Activated CD4-positive, alpha-beta memory T cell treated with anti-CD3 and anti-CD28 coated beads for 36 hours (primary cell): ENCODE measurements at regions of chr19 and their contacts with region 1.

Region 1: DNA sequence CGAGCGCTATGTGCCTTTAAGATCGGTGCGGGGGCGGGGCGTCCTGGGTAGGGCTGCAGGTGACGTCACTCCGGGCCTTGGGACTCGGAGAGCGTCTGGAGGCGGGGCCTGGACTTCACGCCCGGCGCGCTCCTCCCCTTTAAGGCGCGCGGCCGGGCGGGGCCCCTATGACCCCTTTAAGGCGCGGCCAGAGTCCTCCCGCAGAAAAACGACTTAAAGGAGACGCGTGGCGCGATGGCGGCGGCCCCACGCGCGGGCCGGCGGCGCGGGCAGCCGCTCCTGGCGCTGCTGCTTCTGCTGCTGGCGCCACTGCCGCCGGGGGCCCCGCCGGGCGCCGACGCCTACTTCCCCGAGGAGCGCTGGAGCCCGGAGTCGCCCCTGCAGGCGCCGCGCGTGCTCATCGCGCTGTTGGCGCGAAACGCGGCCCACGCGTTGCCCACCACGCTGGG is at the start of gene COLGALT1:
- DNase-seq: peak; percentile 99
- H3K4me3 Mint-ChIP-seq: peak within 1 kb of the TSS; percentile 84
- H3K27ac Mint-ChIP-seq: peak within 1 kb of the TSS; percentile 65
- H3K4me1 Mint-ChIP-seq: peaks cover 10% of the 10 kb centered on the region
- H3K27me3 Mint-ChIP-seq: no peaks in the 10 kb centered on the region
- total RNA-seq, gene COLGALT1: 46.6 to 46.8 TPM

Region 2: GRCh38 chr19:17336872-17337722 is 218.4 kb before region 1 on chr19 and contains the start of gene GTPBP3:
- CTCF ChIA-PET with region 1: no interaction called
- POLR2A ChIA-PET with region 1: no interaction called
- intact Hi-C with region 1: loop called (anchors 1 kb)
- DNase-seq: peak; percentile 98
- H3K4me3 Mint-ChIP-seq: peak within 1 kb of the TSS; percentile 93
- H3K27ac Mint-ChIP-seq: peak within 1 kb of the TSS; percentile 93
- H3K4me1 Mint-ChIP-seq: peaks cover 28% of the 10 kb centered on the region
- H3K27me3 Mint-ChIP-seq: no peaks in the 10 kb centered on the region
- total RNA-seq, gene GTPBP3: 37.7 to 41.4 TPM

Region 3: DNA sequence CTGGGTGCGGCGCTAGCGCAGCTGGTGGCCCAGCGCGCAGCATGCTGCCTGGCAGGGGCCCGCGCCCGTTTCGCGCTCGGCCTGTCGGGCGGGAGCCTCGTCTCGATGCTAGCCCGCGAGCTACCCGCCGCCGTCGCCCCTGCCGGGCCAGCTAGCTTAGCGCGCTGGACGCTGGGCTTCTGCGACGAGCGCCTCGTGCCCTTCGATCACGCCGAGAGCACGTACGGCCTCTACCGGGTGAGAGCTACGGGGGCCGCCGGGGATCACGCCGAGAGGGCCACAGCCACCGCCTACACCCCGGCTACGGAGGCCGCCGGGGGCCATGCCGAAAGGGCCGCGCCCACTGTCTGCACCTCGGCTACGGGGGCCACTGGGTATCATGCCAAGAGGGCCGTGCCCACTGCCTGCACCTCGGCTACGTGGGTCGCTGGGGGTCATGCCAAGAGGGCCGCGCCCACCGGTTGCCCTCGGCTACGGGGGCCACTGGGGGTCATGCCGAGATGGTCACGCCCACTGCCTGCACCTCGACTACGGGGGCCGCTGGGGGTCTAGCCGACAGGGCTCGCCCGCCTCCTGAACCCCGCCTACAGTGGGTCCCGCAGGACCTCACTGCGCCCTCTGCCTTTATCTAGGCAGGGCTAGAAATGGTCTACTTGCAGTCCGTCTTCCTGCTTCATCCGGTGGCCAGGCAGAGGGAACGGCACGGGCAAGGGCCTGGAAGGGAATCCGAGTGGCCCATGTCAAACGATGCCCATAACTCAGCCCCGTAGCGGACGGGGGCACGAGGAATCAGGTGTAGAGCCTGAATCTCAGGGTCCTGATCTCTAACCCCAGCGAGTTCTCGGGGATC is 43.6 kb before region 1 on chr19:
- CTCF ChIA-PET with region 1: no interaction called
- POLR2A ChIA-PET with region 1: no interaction called
- intact Hi-C with region 1: loop called (anchors 1 kb)
- DNase-seq: peak; percentile 90
- H3K4me3 Mint-ChIP-seq: peak overlapping the region; percentile 96
- H3K27ac Mint-ChIP-seq: peak overlapping the region; percentile 80
- H3K4me1 Mint-ChIP-seq: peaks cover 38% of the 10 kb centered on the region
- H3K27me3 Mint-ChIP-seq: no peaks in the 10 kb centered on the region

Region 4: DNA sequence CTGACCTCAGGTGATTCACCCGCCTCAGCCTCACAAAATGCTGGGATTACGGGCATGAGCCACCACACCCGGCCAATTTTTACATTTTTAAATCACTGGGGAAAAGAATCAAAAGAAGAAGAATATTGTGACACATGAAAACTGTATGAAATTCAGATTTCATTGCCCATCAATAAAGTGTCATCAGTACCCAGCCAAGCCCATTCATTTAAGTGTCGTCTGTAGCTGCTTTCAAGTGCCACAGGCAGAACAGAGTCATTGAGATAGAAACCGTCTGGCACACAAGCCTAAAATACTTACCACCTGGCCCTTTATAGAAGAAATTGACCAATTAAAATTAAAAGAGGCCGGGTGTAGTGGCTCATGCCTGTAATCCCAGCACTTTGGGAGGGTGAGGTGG is 15.3 kb after region 1 on chr19:
- CTCF ChIA-PET with region 1: interaction called, 12 read pairs
- POLR2A ChIA-PET with region 1: no interaction called
- intact Hi-C with region 1: no loop called
- DNase-seq: no peak
- H3K4me3 Mint-ChIP-seq: no peak overlapping the region
- H3K27ac Mint-ChIP-seq: no peak overlapping the region
- H3K4me1 Mint-ChIP-seq: no peaks in the 10 kb centered on the region
- H3K27me3 Mint-ChIP-seq: no peaks in the 10 kb centered on the region

Region 5: GRCh38 chr19:17582613-17583012 is 27.1 kb after region 1 on chr19:
- CTCF ChIA-PET with region 1: no interaction called
- POLR2A ChIA-PET with region 1: no interaction called
- intact Hi-C with region 1: no loop called
- DNase-seq: no peak
- H3K4me3 Mint-ChIP-seq: no peak overlapping the region
- H3K27ac Mint-ChIP-seq: no peak overlapping the region
- H3K4me1 Mint-ChIP-seq: no peaks in the 10 kb centered on the region
- H3K27me3 Mint-ChIP-seq: no peaks in the 10 kb centered on the region

Region 6: DNA sequence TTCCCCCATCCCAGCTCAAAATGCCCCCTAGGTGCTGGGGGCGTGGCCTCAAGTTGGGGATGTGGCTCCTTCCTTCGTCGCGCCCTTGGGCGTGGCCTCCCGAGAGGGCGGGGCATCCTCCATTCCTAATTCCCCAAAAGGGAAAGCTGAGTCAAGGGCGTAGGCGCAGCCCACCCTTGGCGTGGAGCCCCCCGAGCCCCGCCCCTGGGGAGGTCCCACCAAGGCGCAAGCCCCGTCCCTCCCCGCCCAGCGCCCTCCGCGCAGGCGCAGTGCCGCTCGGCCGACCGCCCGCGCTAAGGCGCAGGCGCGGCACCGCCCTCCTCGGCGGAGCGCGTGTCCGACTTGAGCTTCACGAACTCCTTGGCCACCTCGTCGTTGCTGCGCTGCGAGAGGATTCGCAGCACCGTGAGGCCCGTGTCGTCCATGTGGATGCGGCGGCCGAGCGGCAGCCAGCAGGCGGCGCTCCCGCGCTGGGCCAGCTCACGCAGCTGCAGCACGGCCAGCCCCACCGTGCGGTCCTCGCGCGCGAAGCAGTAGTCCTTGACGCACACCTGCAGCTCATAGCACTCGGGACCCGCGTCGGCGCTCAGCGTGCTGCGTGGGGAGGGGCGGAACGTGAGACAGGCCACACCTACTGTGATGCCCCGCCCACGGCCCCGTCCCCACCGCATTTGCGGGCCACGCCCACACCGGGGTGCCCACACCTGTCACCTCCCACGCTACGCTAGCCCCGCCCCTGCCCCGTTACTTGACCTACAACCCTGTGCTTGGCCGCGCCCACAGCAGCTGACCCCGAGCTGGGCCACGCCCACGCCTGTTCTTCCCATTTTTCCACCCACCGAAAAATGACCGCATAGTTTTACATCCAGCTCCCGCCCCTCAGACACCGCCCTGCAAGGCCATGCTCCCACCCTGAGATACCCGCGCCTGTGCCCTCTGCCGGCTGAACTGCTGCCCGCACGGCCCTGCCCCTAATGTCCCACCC is 50.5 kb after region 1 on chr19:
- CTCF ChIA-PET with region 1: no interaction called
- POLR2A ChIA-PET with region 1: no interaction called
- intact Hi-C with region 1: loop called (anchors 1 kb)
- DNase-seq: peak; percentile 85
- H3K4me3 Mint-ChIP-seq: peak overlapping the region; percentile 68
- H3K27ac Mint-ChIP-seq: peak overlapping the region; percentile 63
- H3K4me1 Mint-ChIP-seq: peaks cover 7% of the 10 kb centered on the region
- H3K27me3 Mint-ChIP-seq: peaks cover 28% of the 10 kb centered on the region